AG04449 (cell line): ENCODE measurements at regions of chr15 and their contacts with region 1.

Region 1: GRCh38 chr15:89888214-89888804 is 5.5 kb downstream of the AP3S2 start:
- DNase-seq: peak; percentile 69
- H3K4me3 ChIP-seq: no peak overlapping the region
- CTCF ChIP-seq: peak; percentile 53

Region 2: GRCh38 chr15:89728254-89728653 is 160.1 kb before region 1 on chr15:
- CTCF ChIA-PET with region 1: interaction called, 16 read pairs
- POLR2A ChIA-PET with region 1: no interaction called
- DNase-seq: no peak
- H3K4me3 ChIP-seq: no peak overlapping the region
- CTCF ChIP-seq: no peak

Region 3: DNA sequence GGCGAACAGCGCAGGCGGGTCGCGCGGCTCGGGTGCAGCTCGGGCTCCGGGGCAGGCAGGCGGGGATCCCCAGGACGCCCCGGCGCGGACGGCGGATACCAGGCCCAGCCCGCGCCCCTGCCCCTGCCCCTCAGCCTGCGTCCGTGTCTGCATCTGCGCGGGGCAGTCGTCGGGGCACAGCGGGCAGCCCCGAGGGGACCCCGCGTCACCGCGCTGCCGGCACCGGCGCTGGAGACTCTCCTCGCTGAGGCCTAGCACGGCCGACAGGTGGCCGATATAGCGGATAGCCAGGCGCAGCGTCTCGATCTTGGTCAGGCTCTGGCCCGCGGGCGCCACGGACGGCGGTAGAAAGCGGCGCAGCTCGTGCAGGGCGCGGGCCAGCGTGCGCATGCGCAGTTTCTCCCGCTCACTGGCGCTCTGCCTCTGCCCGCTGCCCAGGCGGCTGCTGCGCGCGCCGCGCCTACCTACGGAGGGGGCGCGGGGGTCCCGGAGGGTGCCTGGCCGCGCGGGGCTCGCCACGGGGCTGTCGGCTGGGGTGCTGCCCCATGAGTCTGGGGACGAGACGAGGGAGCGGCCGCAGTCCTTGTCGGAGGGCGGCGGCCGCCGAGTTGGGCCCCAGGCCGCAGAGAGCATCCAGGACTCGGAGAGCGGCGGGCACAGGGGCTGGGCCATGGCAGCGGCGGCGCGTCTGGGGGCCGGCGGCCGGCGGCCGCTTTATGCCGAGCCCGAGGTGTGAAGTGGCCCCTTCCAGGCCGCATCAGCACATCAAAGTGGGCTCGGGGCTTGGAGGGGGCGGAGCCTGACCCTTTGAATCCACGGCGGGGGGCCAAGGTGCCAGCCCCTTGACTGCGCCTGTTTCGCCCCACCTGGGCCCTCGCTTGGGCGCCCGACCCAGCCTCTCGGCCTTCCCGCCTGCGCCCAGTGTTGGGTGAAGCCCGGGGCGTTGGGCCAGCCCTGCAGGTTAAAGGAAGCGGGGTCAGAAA is 137.5 kb before region 1 on chr15 and contains the start of gene MESP1:
- CTCF ChIA-PET with region 1: interaction called, 50 read pairs
- POLR2A ChIA-PET with region 1: interaction called, 5 read pairs
- DNase-seq: no peak
- H3K4me3 ChIP-seq: peak within 1 kb of the TSS; percentile 61
- CTCF ChIP-seq: peak; percentile 88

Region 4: GRCh38 chr15:89768060-89768500 is 120.2 kb before region 1 on chr15:
- CTCF ChIA-PET with region 1: interaction called, 339 read pairs
- POLR2A ChIA-PET with region 1: interaction called, 3 read pairs
- DNase-seq: no peak
- H3K4me3 ChIP-seq: no peak overlapping the region
- CTCF ChIP-seq: no peak